Endothelial cell of umbilical vein (primary cell): ENCODE measurements at regions of chrX and their contacts with region 1.

Region 1: DNA sequence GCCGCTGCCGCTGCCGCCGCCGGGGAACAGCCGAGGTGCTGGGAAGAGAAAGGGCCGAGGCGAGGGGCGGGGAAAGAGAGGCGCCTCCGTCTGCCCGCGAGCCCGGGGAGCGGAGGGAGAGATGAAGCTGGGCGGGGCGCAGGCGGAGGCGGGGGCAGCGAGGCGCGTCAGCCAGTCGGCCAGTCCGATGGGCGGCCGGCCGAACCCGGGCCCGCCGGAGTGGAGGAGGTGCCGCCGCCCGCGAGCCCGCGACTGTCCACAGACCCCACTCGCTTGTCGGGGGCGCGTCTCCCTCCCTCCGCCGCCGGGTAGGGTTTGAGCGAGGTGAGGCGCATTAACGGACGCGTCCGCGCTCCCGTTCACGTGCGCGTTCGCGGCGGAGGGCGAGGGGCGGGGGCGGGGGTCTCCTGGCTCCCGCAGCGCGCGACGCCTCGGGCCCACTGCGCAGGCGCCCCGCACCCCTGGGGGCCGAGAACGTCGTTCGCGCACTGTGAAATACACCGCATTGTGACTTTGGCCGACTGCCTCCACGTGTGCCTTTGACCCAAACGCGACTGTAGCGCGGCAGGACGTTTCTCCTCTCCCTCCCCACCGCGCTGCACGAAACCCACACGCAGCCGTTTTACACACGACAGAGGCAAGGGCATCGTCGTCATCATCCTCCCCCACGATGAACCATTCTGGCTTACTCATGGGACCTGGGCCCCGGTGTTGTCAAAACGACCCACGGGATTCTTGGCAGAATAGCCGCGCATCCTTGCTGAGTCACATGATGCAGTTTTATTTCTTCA is at the start of gene NUDT11:
- DNase-seq: peak; percentile 68
- H3K4me3 ChIP-seq: peak within 1 kb of the TSS; percentile 23 to 56 (median 45)
- H3K27ac ChIP-seq: peak within 1 kb of the TSS; percentile 7
- H3K4me1 ChIP-seq: peaks cover 4% of the 10 kb centered on the region
- H3K27me3 ChIP-seq: no peaks in the 10 kb centered on the region
- CTCF ChIP-seq: no peak
- POLR2A ChIP-seq: no peak
- total RNA-seq, gene NUDT11: 3.7 and 3.9 TPM in 2 replicates

Region 2: DNA sequence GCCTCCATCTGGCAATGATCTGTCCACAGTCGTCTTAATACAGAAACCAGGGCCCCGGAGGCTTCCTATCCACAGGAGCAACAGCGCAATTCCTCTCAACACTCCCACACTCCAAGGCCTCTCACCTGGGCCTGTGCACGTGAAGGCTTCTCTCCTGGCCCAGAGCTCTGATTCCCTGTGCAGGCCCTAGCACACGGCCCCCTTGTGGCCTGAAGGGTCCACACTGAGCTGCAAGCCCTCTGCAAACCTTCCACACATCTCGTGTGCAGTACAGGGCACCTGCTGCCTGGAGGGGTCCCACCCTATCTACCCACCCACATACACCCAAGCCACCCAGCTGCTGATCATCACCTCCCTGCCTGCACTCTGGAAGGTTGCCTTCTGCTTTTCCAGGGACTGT is 314.2 kb before region 1 on chrX:
- CTCF ChIA-PET with region 1: no interaction called
- POLR2A ChIA-PET with region 1: no interaction called
- dilution Hi-C with region 1: no loop called
- intact Hi-C with region 1: no loop called
- DNase-seq: no peak
- H3K4me3 ChIP-seq: no peak overlapping the region
- H3K27ac ChIP-seq: no peak overlapping the region
- H3K4me1 ChIP-seq: no peaks in the 10 kb centered on the region
- H3K27me3 ChIP-seq: no peaks in the 10 kb centered on the region
- CTCF ChIP-seq: no peak
- POLR2A ChIP-seq: no peak

Region 3: GRCh38 chrX:51316271-51316670 is 180.4 kb before region 1 on chrX:
- CTCF ChIA-PET with region 1: no interaction called
- POLR2A ChIA-PET with region 1: no interaction called
- dilution Hi-C with region 1: no loop called
- intact Hi-C with region 1: no loop called
- DNase-seq: no peak
- H3K4me3 ChIP-seq: no peak overlapping the region
- H3K27ac ChIP-seq: no peak overlapping the region
- H3K4me1 ChIP-seq: no peaks in the 10 kb centered on the region
- H3K27me3 ChIP-seq: no peaks in the 10 kb centered on the region
- CTCF ChIP-seq: no peak
- POLR2A ChIP-seq: no peak

Region 4: DNA sequence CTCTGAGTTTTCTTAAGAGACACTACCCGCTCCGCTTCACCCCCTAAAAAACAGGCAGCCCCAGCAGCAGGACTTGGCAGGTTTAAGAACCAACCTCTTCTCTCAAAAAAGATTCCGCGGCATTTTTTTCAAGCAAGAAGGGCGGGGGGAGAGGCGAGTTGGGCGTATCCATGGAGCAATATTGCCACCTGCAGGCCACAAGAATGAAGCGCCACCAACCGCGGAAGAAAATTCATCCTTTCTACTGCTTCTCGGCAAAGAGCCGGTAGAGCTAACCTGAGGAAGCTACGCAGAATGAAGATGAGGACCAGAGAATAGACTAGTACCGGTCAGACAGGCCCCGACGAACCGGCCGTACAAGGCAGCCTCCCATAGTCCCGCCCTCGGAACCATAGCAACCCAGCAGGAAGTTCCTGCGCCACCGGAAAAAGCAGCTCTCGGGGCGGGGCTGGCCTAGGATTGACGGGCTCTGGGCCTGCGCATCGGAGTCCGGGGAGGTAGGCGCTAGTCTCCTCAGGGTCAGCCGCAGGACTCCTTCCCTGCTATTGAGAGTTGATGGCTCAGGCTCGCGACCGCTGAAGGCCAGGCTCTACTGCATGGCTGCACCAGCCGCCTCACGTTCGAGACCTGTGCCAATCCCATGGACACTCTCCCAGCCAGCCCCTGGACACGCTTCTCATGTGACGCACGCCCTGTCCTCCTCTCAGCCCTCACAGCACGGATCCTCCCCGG is 764.9 kb after region 1 on chrX:
- CTCF ChIA-PET with region 1: no interaction called
- POLR2A ChIA-PET with region 1: no interaction called
- dilution Hi-C with region 1: no loop called
- intact Hi-C with region 1: loop called (anchors 10 kb)
- DNase-seq: peak; percentile 76
- H3K4me3 ChIP-seq: peak overlapping the region; percentile 26 to 67 (median 51)
- H3K27ac ChIP-seq: peak overlapping the region; percentile 61
- H3K4me1 ChIP-seq: no peaks in the 10 kb centered on the region
- H3K27me3 ChIP-seq: no peaks in the 10 kb centered on the region
- CTCF ChIP-seq: peak; percentile 65 to 68
- POLR2A ChIP-seq: peak; percentile 73